ENCODE measurements at regions of chr14 and their contacts with region 1.

Region 1: GRCh38 chr14:29548948-29549370 is 378.7 kb downstream of the PRKD1 start:
- DNase-seq: no peak
- ATAC-seq: peak; percentile 42
- H3K4me3 Mint-ChIP-seq: no peak overlapping the region
- H3K27ac Mint-ChIP-seq: no peak overlapping the region
- H3K4me1 Mint-ChIP-seq: no peaks in the 10 kb centered on the region
- H3K27me3 Mint-ChIP-seq: no peaks in the 10 kb centered on the region

Region 2: GRCh38 chr14:29390046-29390832 is 158.7 kb before region 1 on chr14:
- CTCF ChIA-PET with region 1: no interaction called
- POLR2A ChIA-PET with region 1: no interaction called
- intact Hi-C with region 1: no loop called
- DNase-seq: no peak
- ATAC-seq: no peak
- H3K4me3 Mint-ChIP-seq: no peak overlapping the region
- H3K27ac Mint-ChIP-seq: no peak overlapping the region
- H3K4me1 Mint-ChIP-seq: no peaks in the 10 kb centered on the region
- H3K27me3 Mint-ChIP-seq: no peaks in the 10 kb centered on the region

Region 3: GRCh38 chr14:29521526-29522137 is 27.3 kb before region 1 on chr14:
- CTCF ChIA-PET with region 1: no interaction called
- POLR2A ChIA-PET with region 1: no interaction called
- intact Hi-C with region 1: no loop called
- DNase-seq: peak; percentile 28
- ATAC-seq: no peak
- H3K4me3 Mint-ChIP-seq: no peak overlapping the region
- H3K27ac Mint-ChIP-seq: no peak overlapping the region
- H3K4me1 Mint-ChIP-seq: no peaks in the 10 kb centered on the region
- H3K27me3 Mint-ChIP-seq: no peaks in the 10 kb centered on the region

Region 4: DNA sequence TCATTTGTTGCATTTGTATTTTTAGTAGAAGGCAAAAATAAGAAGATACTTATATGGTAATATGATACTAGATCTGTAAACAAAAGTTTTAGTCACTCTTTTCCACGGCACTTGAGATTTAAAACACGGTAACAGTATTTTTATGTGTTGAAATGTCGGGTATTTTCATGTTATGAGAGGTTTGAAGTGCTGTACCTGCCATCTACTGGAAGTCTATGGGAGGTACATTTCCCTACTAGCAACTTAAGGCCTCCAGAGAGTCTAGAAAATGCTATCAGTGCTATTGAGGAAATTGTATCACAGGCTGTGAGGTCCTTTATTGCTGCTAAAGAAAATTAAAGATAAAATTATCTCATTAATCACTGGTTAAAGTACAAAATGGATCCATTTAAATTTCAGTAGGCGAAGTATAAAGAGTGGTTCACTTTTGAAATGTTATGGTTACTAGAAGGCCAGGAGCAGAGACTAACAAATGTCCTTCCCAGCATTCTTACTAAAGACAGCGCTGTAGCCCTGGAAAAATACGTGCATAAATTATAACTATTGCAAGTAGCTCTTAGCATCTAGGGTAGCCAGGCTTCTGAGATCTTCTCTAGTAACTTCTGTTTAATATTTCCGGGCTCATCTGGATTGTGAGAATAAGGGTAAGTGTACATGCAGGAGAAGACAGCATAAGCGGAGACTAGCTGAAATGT is 456.3 kb after region 1 on chr14:
- CTCF ChIA-PET with region 1: no interaction called
- POLR2A ChIA-PET with region 1: no interaction called
- intact Hi-C with region 1: loop called in 1 of 2 experiments (anchors 10 kb)
- DNase-seq: no peak
- ATAC-seq: no peak
- H3K4me3 Mint-ChIP-seq: no peak overlapping the region
- H3K27ac Mint-ChIP-seq: no peak overlapping the region
- H3K4me1 Mint-ChIP-seq: no peaks in the 10 kb centered on the region
- H3K27me3 Mint-ChIP-seq: no peaks in the 10 kb centered on the region

Region 5: GRCh38 chr14:30214461-30215090 is 665.6 kb after region 1 on chr14:
- CTCF ChIA-PET with region 1: no interaction called
- POLR2A ChIA-PET with region 1: no interaction called
- intact Hi-C with region 1: loop called in 1 of 2 experiments (anchors 1 kb)
- DNase-seq: peak; percentile 4
- ATAC-seq: peak; percentile 33
- H3K4me3 Mint-ChIP-seq: no peak overlapping the region
- H3K27ac Mint-ChIP-seq: no peak overlapping the region
- H3K4me1 Mint-ChIP-seq: no peaks in the 10 kb centered on the region
- H3K27me3 Mint-ChIP-seq: no peaks in the 10 kb centered on the region

Region 6: DNA sequence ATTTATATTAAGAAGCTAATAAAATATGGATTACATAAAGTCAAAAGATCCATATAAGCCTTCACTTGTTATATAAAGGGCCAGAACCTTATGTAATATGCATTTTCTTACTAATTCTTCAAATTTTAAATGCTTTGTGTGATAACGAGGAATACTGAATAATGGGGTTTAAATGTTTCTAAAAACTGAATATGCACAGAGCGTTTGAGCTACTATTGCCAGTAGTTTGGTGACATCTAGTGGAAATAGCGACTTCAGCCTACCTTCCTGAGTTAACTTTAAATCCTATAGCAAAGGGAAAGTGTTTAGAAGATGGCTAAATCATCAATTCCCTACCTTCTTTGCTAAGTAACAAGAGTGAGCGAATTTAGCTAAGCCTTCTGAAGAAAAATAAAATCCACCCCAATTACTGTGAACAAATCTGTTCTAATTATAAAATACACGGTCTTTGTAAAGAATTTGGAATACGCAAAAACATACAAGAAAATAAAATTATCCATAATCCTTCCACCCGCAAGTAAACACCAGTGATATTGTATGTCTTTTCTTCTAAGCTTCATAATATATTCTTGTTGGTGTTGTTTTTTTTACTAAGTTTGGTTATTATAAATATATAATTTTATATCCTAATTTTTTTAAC is 894.5 kb after region 1 on chr14:
- CTCF ChIA-PET with region 1: interaction called, 3 read pairs
- POLR2A ChIA-PET with region 1: no interaction called
- intact Hi-C with region 1: loop called in 1 of 2 experiments (anchors 5 kb)
- DNase-seq: no peak
- ATAC-seq: no peak
- H3K4me3 Mint-ChIP-seq: no peak overlapping the region
- H3K27ac Mint-ChIP-seq: no peak overlapping the region
- H3K4me1 Mint-ChIP-seq: no peaks in the 10 kb centered on the region
- H3K27me3 Mint-ChIP-seq: peaks cover 5% of the 10 kb centered on the region

Region 7: DNA sequence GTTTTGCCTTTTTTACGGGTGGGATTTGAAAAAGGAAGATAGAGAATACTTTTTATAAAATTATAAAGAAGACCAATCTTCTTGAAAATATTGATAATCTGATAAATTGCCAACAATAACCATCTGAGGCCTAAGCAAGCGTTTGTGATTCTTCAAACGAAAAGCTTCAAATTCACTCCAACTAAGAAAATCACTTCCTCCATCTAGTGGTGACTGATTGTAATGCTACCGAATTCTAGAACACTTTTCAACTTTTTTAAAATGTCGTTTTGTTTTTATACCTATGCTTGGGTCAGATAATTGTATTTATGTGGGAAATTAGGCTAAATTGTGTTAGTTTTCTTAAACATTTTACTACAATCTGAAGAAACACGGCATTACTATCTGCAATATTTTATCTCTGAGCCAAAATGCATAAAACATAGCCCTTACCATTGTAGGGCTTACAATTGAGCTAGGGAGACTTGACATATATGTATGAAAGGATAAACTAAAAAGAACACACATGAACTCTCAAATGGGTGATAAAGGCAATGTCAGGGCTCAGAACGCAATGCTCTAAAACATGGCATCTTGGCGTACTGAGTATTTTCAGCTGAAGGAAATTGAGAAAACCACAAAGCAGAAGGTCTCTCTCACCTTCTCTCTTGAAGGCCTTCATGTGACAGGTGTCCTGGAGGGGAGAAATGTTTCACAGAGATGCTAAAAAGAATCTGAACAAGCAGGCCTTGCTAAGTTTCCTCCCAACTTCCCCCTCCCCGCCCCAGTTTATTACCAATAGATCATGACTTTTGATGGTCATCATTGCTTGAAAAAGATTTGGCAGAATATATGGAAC is 973.2 kb after region 1 on chr14:
- CTCF ChIA-PET with region 1: no interaction called
- POLR2A ChIA-PET with region 1: no interaction called
- intact Hi-C with region 1: loop called (anchors 10 kb)
- DNase-seq: no peak
- ATAC-seq: peak; percentile 39
- H3K4me3 Mint-ChIP-seq: no peak overlapping the region
- H3K27ac Mint-ChIP-seq: no peak overlapping the region
- H3K4me1 Mint-ChIP-seq: peaks cover 10% of the 10 kb centered on the region
- H3K27me3 Mint-ChIP-seq: no peaks in the 10 kb centered on the region